Naive thymus-derived CD4-positive, alpha-beta T cell (primary cell): ENCODE measurements at regions of chr16 and their contacts with region 1.

Region 1: DNA sequence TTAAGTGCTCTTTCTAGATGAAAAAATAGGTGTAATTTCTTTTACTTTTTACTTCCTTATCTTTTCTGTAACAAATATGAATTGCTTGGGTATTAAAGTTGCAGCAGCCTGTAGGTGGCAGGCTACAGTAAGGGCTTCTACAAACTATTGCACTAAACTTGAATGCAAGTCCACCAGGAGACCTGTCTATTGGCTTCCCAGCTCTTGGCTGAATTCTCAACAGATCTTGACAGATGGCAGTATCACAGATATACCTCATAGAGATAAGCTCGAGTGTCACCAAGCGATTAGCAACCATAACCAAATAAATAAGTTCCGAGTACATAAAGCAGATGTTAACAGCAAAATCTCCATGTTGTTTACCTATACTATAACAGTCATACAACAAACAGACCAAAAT is 5.9 kb downstream of the BBS2 start:
- DNase-seq: peak in 7 of 9 donors; percentile 37 to 64 (median 56)
- ATAC-seq: peak; percentile 92
- H3K4me3 ChIP-seq: no peak overlapping the region
- H3K4me3 Mint-ChIP-seq: peak overlapping the region in 2 of 10 donors; percentile 3 to 6
- H3K27ac ChIP-seq: no peak overlapping the region
- H3K27ac Mint-ChIP-seq: peak overlapping the region in 1 of 9 donors; percentile 39
- H3K4me1 ChIP-seq: peaks cover 0 to 19% of the 10 kb centered on the region in 2 donors
- H3K4me1 Mint-ChIP-seq: peaks cover 10 to 77% (median 64%) of the 10 kb centered on the region in 7 donors
- H3K27me3 ChIP-seq: no peaks in the 10 kb centered on the region
- H3K27me3 Mint-ChIP-seq: no peaks in the 10 kb centered on the region

Region 2: GRCh38 chr16:56547120-56547948 is 33.4 kb after region 1 on chr16:
- CTCF ChIA-PET with region 1: no interaction called
- POLR2A ChIA-PET with region 1: no interaction called
- intact Hi-C with region 1: loop called in 1 of 2 experiments (anchors 5 kb)
- DNase-seq: no peak
- ATAC-seq: no peak
- H3K4me3 ChIP-seq: no peak overlapping the region
- H3K4me3 Mint-ChIP-seq: peak overlapping the region in 4 of 10 donors; percentile 1 to 68 (median 44)
- H3K27ac ChIP-seq: no peak overlapping the region
- H3K27ac Mint-ChIP-seq: peak overlapping the region in 6 of 9 donors; percentile 3 to 72 (median 40)
- H3K4me1 ChIP-seq: peaks cover 12 to 14% of the 10 kb centered on the region in 2 donors
- H3K4me1 Mint-ChIP-seq: peaks cover 7 to 17% (median 16%) of the 10 kb centered on the region in 7 donors
- H3K27me3 ChIP-seq: no peaks in the 10 kb centered on the region
- H3K27me3 Mint-ChIP-seq: peaks cover 2 to 27% (median 4%) of the 10 kb centered on the region in 5 donors

Region 3: DNA sequence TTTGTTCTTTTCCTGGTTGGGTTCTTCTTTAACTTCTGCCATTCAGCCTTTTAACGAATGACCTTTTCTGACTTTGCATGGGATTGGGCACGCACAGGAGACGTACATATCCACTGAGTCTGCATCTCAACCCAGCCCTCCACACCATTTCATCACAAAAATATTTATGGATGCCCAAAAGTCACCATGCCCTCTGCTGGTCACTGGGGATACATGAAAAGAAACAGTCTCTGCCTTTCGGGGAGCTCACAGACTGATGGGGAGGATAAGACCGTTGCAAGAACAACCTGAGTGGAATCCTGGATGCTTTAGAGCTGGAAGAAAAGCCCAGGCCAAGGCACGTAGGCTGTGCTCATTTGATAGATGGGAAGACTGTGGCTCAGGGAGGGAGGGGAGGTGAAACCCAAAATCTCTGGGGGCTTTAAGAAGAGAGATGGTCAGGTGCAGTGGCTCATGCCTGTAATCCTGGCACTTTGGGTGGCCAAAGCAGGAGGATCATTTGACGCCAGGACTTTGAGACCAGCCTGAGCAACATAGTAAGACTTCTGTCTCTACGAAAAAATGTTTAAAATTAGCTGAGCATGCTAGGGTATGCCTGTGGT is 86.5 kb after region 1 on chr16:
- CTCF ChIA-PET with region 1: interaction called, 3 read pairs
- POLR2A ChIA-PET with region 1: no interaction called
- intact Hi-C with region 1: loop called (anchors 1 kb)
- DNase-seq: peak in 1 of 9 donors; percentile 13
- ATAC-seq: peak; percentile 67
- H3K4me3 ChIP-seq: no peak overlapping the region
- H3K4me3 Mint-ChIP-seq: no peak overlapping the region
- H3K27ac ChIP-seq: no peak overlapping the region
- H3K27ac Mint-ChIP-seq: peak overlapping the region in 1 of 9 donors; percentile 7
- H3K4me1 ChIP-seq: no peaks in the 10 kb centered on the region
- H3K4me1 Mint-ChIP-seq: peaks cover 0 to 13% (median 5%) of the 10 kb centered on the region in 7 donors
- H3K27me3 ChIP-seq: no peaks in the 10 kb centered on the region
- H3K27me3 Mint-ChIP-seq: peaks cover 0 to 36% (median 3%) of the 10 kb centered on the region in 5 donors